ENCODE measurements at regions of chr2 and their contacts with region 1.

Region 1: DNA sequence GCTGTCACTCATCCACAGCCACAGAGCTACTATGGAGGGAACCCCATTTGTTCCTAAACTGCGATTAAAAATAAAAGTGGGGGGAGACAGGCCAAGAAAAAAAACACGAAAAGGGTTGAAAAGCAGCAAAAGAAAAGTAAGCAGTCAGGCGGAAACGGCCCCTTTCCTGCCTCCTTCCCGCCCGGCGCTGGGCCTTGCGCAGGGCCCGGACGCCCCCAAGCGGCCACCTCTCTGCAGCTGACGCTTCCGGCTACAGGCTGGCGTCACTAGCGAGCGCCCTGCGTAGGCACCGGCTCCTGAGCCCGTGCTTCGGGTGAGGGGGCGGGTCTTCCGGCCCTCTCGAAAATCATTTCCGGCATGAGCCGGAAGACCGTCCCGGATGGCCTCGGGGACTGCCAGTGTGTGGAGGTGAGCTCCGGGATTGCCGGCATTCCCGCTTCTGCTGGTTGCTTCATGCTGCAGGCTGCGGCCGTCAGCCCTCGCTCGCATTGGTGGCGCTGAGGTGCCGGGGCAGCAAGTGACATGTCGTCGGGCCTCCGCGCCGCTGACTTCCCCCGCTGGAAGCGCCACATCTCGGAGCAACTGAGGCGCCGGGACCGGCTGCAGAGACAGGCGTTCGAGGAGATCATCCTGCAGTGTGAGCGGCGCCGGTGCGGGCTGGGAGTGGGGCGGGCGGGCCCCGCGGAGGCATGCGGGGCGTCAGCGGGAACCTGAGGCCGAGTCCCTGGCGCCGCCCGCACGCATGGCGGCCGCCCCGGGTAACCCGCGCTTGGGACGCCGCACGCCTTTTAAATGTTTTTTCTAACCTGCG is at the start of gene ATG16L1:
- DNase-seq: peak; percentile 85 to 96 (median 95)
- ATAC-seq: peak; percentile 99
- H3K4me3 ChIP-seq: peak within 1 kb of the TSS; percentile 80
- H3K4me3 Mint-ChIP-seq: peak within 1 kb of the TSS; percentile 86 to 96 (median 92)
- H3K27ac ChIP-seq: peak within 1 kb of the TSS; percentile 81
- H3K27ac Mint-ChIP-seq: peak within 1 kb of the TSS; percentile 89 to 98 (median 93)
- H3K4me1 ChIP-seq: peaks cover 36 to 50% of the 10 kb centered on the region in 2 donors
- H3K4me1 Mint-ChIP-seq: peaks cover 47 to 81% (median 74%) of the 10 kb centered on the region in 7 donors
- H3K27me3 ChIP-seq: no peaks in the 10 kb centered on the region
- H3K27me3 Mint-ChIP-seq: no peaks in the 10 kb centered on the region
- total RNA-seq, gene ATG16L1: 61.7 to 115 (median 83.3) TPM

Region 2: GRCh38 chr2:232550354-232551249 is 700.9 kb before region 1 on chr2 and contains the starts of genes EIF4E2 and TIGD1:
- CTCF ChIA-PET with region 1: interaction called, 3 read pairs
- POLR2A ChIA-PET with region 1: interaction called, 3 read pairs
- intact Hi-C with region 1: loop called (anchors 1 to 2 kb)
- DNase-seq: peak; percentile 82 to 93 (median 90)
- ATAC-seq: peak; percentile 91
- H3K4me3 ChIP-seq: peak within 1 kb of the TSS; percentile 88
- H3K4me3 Mint-ChIP-seq: peak within 1 kb of the TSS; percentile 91 to 100 (median 100)
- H3K27ac ChIP-seq: peak within 1 kb of the TSS; percentile 92
- H3K27ac Mint-ChIP-seq: peak within 1 kb of the TSS; percentile 97 to 100 (median 100)
- H3K4me1 ChIP-seq: peaks cover 15 to 36% of the 10 kb centered on the region in 2 donors
- H3K4me1 Mint-ChIP-seq: peaks cover 53 to 86% (median 83%) of the 10 kb centered on the region in 7 donors
- H3K27me3 ChIP-seq: no peaks in the 10 kb centered on the region
- H3K27me3 Mint-ChIP-seq: no peaks in the 10 kb centered on the region
- total RNA-seq, gene EIF4E2: 51.9 to 77.6 (median 61.6) TPM
- total RNA-seq, gene TIGD1: 9.7 to 23.4 (median 19.3) TPM

Region 3: DNA sequence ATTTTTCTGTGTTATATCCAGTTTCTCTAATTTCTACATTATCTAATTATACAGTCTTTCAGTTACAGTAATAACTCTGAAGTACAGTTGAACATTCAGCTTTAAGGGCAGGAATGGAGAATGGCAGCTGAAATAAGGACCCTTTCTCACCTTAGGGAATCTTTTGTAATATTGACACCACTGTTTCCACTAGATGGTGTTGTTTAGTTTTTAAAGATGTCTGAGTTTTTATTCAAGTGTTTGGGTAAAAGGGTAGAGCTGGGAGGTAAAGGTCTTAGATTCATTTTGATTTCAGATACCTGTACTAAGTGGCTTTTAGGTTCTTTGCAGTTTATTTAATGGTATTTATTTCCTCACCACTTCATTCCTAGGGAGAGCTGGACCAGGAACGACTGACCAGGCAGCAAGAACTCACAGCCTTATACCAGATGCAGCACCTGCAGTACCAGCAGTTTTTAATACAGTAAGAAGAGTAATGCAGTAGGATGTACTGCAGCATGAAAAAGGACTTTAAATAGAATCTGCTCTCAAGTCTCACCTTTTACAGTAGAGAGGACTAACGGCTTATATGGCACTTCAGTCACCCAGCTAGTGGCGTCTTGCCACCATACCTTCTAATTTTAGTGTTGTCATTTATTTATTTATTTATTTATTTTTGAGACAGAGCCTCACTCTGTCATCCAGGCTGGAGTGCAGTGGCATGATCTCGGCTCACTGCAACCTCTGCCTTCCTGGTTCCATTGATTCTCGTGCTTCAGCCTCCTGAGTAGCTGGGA is 442.0 kb before region 1 on chr2:
- CTCF ChIA-PET with region 1: no interaction called
- POLR2A ChIA-PET with region 1: no interaction called
- intact Hi-C with region 1: loop called in 1 of 2 experiments (anchors 1 kb)
- DNase-seq: peak in 1 of 9 donors; percentile 5
- ATAC-seq: no peak
- H3K4me3 ChIP-seq: no peak overlapping the region
- H3K4me3 Mint-ChIP-seq: no peak overlapping the region
- H3K27ac ChIP-seq: no peak overlapping the region
- H3K27ac Mint-ChIP-seq: peak overlapping the region in 3 of 9 donors; percentile 2 to 53 (median 8)
- H3K4me1 ChIP-seq: no peaks in the 10 kb centered on the region
- H3K4me1 Mint-ChIP-seq: peaks cover 0 to 2% (median 0%) of the 10 kb centered on the region in 7 donors
- H3K27me3 ChIP-seq: no peaks in the 10 kb centered on the region
- H3K27me3 Mint-ChIP-seq: no peaks in the 10 kb centered on the region

Region 4: DNA sequence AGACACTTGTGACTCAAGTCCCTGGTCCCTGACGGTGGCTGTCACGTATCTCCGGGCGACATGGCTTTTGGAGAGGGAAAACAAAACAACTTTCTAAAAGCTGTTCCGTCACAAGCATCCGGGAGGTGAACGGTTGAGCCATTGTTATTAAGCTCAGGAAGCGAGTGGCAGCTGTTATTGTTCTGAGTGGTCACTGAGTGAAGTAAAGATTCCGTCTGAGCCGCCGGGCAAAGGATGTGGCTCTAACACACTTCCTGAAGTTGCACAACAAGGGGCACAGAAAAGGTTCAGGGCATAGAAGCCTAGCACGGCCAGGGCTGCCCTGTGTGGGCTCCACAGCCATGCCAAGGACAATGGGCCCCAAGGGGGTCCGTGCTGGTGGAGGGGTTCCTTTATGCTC is 167.0 kb before region 1 on chr2:
- CTCF ChIA-PET with region 1: no interaction called
- POLR2A ChIA-PET with region 1: interaction called, 5 read pairs
- intact Hi-C with region 1: loop called (anchors 5 kb)
- DNase-seq: peak in 7 of 9 donors; percentile 32 to 66 (median 55)
- ATAC-seq: peak; percentile 64
- H3K4me3 ChIP-seq: peak overlapping the region; percentile 27
- H3K4me3 Mint-ChIP-seq: peak overlapping the region; percentile 79 to 86 (median 82)
- H3K27ac ChIP-seq: peak overlapping the region; percentile 57
- H3K27ac Mint-ChIP-seq: peak overlapping the region in 8 of 9 donors; percentile 88 to 98 (median 93)
- H3K4me1 ChIP-seq: peaks cover 64 to 82% of the 10 kb centered on the region in 2 donors
- H3K4me1 Mint-ChIP-seq: peaks cover 74 to 93% (median 88%) of the 10 kb centered on the region in 7 donors
- H3K27me3 ChIP-seq: no peaks in the 10 kb centered on the region
- H3K27me3 Mint-ChIP-seq: no peaks in the 10 kb centered on the region

Region 5: GRCh38 chr2:233114421-233114861 is 137.1 kb before region 1 on chr2:
- CTCF ChIA-PET with region 1: no interaction called
- POLR2A ChIA-PET with region 1: no interaction called
- intact Hi-C with region 1: no loop called
- DNase-seq: peak in 6 of 9 donors; percentile 26 to 47 (median 34)
- ATAC-seq: peak; percentile 67
- H3K4me3 ChIP-seq: no peak overlapping the region
- H3K4me3 Mint-ChIP-seq: peak overlapping the region in 8 of 10 donors; percentile 37 to 75 (median 61)
- H3K27ac ChIP-seq: no peak overlapping the region
- H3K27ac Mint-ChIP-seq: peak overlapping the region in 8 of 9 donors; percentile 15 to 84 (median 72)
- H3K4me1 ChIP-seq: peaks cover 7 to 55% of the 10 kb centered on the region in 2 donors
- H3K4me1 Mint-ChIP-seq: peaks cover 49 to 91% (median 81%) of the 10 kb centered on the region in 7 donors
- H3K27me3 ChIP-seq: no peaks in the 10 kb centered on the region
- H3K27me3 Mint-ChIP-seq: no peaks in the 10 kb centered on the region

Region 6: GRCh38 chr2:233234264-233234663 is 17.2 kb before region 1 on chr2:
- CTCF ChIA-PET with region 1: no interaction called
- POLR2A ChIA-PET with region 1: interaction called, 15 read pairs
- intact Hi-C with region 1: loop called in 1 of 2 experiments (anchors 1 kb)
- DNase-seq: peak in 1 of 9 donors; percentile 35
- ATAC-seq: no peak
- H3K4me3 ChIP-seq: no peak overlapping the region
- H3K4me3 Mint-ChIP-seq: peak overlapping the region in 2 of 10 donors; percentile 56 to 72
- H3K27ac ChIP-seq: no peak overlapping the region
- H3K27ac Mint-ChIP-seq: peak overlapping the region in 4 of 9 donors; percentile 14 to 87 (median 46)
- H3K4me1 ChIP-seq: peaks cover 19 to 24% of the 10 kb centered on the region in 2 donors
- H3K4me1 Mint-ChIP-seq: peaks cover 22 to 67% (median 30%) of the 10 kb centered on the region in 7 donors
- H3K27me3 ChIP-seq: no peaks in the 10 kb centered on the region
- H3K27me3 Mint-ChIP-seq: no peaks in the 10 kb centered on the region

Region 7: GRCh38 chr2:233331536-233331935 is 80.0 kb after region 1 on chr2:
- CTCF ChIA-PET with region 1: no interaction called
- POLR2A ChIA-PET with region 1: interaction called, 3 read pairs
- intact Hi-C with region 1: loop called in 1 of 2 experiments (anchors 1 kb)
- DNase-seq: peak; percentile 45 to 89 (median 83)
- ATAC-seq: peak; percentile 96
- H3K4me3 ChIP-seq: peak overlapping the region; percentile 17
- H3K4me3 Mint-ChIP-seq: peak overlapping the region; percentile 65 to 82 (median 73)
- H3K27ac ChIP-seq: peak overlapping the region; percentile 75
- H3K27ac Mint-ChIP-seq: peak overlapping the region; percentile 94 to 99 (median 98)
- H3K4me1 ChIP-seq: peaks cover 46 to 58% of the 10 kb centered on the region in 2 donors
- H3K4me1 Mint-ChIP-seq: peaks cover 33 to 64% (median 51%) of the 10 kb centered on the region in 7 donors
- H3K27me3 ChIP-seq: no peaks in the 10 kb centered on the region
- H3K27me3 Mint-ChIP-seq: peaks cover 0 to 2% (median 0%) of the 10 kb centered on the region in 5 donors

Region 8: DNA sequence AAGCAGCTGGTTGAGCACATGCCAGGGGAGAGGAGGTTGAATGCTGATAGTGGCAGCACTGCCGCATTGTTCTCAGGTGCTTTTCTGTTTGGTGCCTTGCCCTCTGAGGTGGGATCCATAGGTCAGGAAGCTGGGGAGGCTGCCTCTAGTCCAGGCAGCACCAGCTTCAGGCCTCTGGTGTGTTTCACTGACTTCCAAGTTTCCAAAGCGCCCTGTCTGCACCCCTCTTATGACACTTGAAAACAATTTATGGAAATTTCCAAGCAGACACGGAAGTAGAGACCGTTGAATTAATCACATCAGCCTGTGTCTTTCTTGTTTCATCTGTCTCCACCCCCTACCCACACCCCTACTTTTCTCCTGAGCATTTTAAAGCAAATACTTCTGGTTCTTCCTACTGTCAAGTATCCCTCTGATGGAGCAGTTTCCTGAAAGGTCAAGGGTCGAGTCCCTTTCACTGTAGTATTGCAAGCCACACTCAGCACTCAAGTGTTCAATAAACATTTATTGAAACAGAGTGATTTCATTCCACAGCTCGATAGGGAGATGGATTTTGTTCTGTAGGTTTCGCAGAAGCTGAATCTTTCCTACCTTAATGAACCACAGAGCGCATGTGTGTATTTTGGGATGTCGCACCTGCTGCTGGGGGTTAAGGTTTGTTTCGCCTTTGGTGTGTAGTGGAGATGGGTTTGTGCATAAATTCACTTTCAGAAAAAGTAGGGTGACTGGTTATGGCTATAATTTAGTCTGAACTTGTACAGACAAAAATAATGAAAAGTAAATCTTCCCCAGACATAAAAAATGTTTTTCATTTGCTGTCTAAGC is 124.2 kb after region 1 on chr2:
- CTCF ChIA-PET with region 1: no interaction called
- POLR2A ChIA-PET with region 1: no interaction called
- intact Hi-C with region 1: no loop called
- DNase-seq: no peak
- ATAC-seq: no peak
- H3K4me3 ChIP-seq: no peak overlapping the region
- H3K4me3 Mint-ChIP-seq: peak overlapping the region in 1 of 10 donors; percentile 34
- H3K27ac ChIP-seq: no peak overlapping the region
- H3K27ac Mint-ChIP-seq: peak overlapping the region in 8 of 9 donors; percentile 7 to 64 (median 42)
- H3K4me1 ChIP-seq: peaks cover under 1 to 4% of the 10 kb centered on the region in 2 donors
- H3K4me1 Mint-ChIP-seq: peaks cover 7 to 64% (median 42%) of the 10 kb centered on the region in 7 donors
- H3K27me3 ChIP-seq: no peaks in the 10 kb centered on the region
- H3K27me3 Mint-ChIP-seq: no peaks in the 10 kb centered on the region

Region 9: DNA sequence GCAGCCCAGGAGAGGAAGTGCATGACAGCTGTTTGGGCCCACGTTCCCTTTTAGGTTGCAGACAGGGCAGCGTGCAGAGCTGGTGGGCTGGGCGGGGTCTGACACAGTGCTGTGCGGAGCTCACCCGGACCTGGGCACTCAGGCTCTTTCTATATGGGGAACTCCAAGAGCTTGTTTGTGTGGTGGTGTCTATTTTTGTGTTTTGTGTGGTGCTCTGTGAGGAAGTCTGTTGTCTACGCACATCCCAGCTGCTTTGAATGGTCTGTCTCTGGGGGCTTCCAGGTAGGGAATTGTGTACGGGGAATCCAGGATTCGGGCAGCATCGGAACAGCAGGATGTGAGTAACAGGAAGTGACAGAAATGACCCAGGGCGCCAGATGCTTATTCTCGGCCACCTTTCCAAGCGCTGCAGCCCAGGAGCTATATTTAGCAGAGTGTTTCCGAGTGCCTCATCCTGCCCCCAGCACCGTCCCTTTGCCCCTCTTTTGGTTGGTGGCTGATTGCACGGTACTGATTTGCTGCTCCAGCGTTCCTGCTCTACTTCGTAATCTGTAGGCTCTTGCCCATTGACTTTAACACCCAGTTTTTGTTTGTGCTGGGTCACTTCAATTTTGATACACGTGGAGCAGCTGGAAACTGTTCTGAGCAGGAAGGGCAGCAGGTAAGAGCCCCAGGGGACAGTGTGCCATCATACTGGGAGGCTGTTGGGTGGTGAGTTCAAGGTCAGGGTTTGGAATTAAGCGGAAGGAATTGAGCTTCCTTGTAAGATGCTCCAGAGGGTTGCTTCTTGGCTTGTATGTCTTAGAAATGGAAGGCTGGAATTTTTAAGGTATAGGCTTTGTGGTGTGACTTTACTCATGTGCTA is 167.5 kb after region 1 on chr2:
- CTCF ChIA-PET with region 1: no interaction called
- POLR2A ChIA-PET with region 1: no interaction called
- intact Hi-C with region 1: no loop called
- DNase-seq: peak in 6 of 9 donors; percentile 40 to 69 (median 50)
- ATAC-seq: peak; percentile 74
- H3K4me3 ChIP-seq: peak overlapping the region; percentile 70
- H3K4me3 Mint-ChIP-seq: peak overlapping the region; percentile 84 to 99 (median 92)
- H3K27ac ChIP-seq: peak overlapping the region; percentile 80
- H3K27ac Mint-ChIP-seq: peak overlapping the region; percentile 86 to 99 (median 97)
- H3K4me1 ChIP-seq: peaks cover 65 to 93% of the 10 kb centered on the region in 2 donors
- H3K4me1 Mint-ChIP-seq: peaks cover 78 to 100% (median 96%) of the 10 kb centered on the region in 7 donors
- H3K27me3 ChIP-seq: no peaks in the 10 kb centered on the region
- H3K27me3 Mint-ChIP-seq: no peaks in the 10 kb centered on the region